CD4-positive, alpha-beta T cell (primary cell): ENCODE measurements at regions of chr14 and their contacts with region 1.

Region 1: GRCh38 chr14:62162998-62163589 is 400.9 kb downstream of the SNAPC1 start:
- DNase-seq: peak in 3 of 14 experiments; percentile 11 to 32 (median 26)
- ATAC-seq: no peak
- H3K4me3 ChIP-seq: no peak overlapping the region
- H3K4me3 Mint-ChIP-seq: no peak overlapping the region
- H3K27ac ChIP-seq: no peak overlapping the region
- H3K27ac Mint-ChIP-seq: no peak overlapping the region
- H3K4me1 ChIP-seq: no peaks in the 10 kb centered on the region
- H3K4me1 Mint-ChIP-seq: no peaks in the 10 kb centered on the region
- H3K27me3 ChIP-seq: peaks cover 6 to 14% of the 10 kb centered on the region in 2 experiments
- H3K27me3 Mint-ChIP-seq: peaks cover 61% of the 10 kb centered on the region
- CTCF ChIP-seq: peak; percentile 58

Region 2: GRCh38 chr14:61475316-61475715 is 687.8 kb before region 1 on chr14:
- CTCF ChIA-PET with region 1: no interaction called
- POLR2A ChIA-PET with region 1: no interaction called
- intact Hi-C with region 1: no loop called
- DNase-seq: peak in 3 of 14 experiments; percentile 71 to 80 (median 76)
- ATAC-seq: no peak
- H3K4me3 ChIP-seq: no peak overlapping the region
- H3K4me3 Mint-ChIP-seq: peak overlapping the region; percentile 5
- H3K27ac ChIP-seq: peak overlapping the region; percentile 95 to 97
- H3K27ac Mint-ChIP-seq: peak overlapping the region; percentile 84
- H3K4me1 ChIP-seq: peaks cover 86% of the 10 kb centered on the region
- H3K4me1 Mint-ChIP-seq: peaks cover 96% of the 10 kb centered on the region
- H3K27me3 ChIP-seq: no peaks in the 10 kb centered on the region
- H3K27me3 Mint-ChIP-seq: no peaks in the 10 kb centered on the region
- CTCF ChIP-seq: peak; percentile 71

Region 3: GRCh38 chr14:63276492-63277342 is 1113.6 kb after region 1 on chr14:
- CTCF ChIA-PET with region 1: no interaction called
- POLR2A ChIA-PET with region 1: no interaction called
- intact Hi-C with region 1: loop called (anchors 2 to 10 kb)
- DNase-seq: peak in 3 of 14 experiments; percentile 18 to 33 (median 23)
- ATAC-seq: no peak
- H3K4me3 ChIP-seq: no peak overlapping the region
- H3K4me3 Mint-ChIP-seq: no peak overlapping the region
- H3K27ac ChIP-seq: no peak overlapping the region
- H3K27ac Mint-ChIP-seq: no peak overlapping the region
- H3K4me1 ChIP-seq: no peaks in the 10 kb centered on the region
- H3K4me1 Mint-ChIP-seq: no peaks in the 10 kb centered on the region
- H3K27me3 ChIP-seq: peaks cover 0 to 6% of the 10 kb centered on the region in 2 experiments
- H3K27me3 Mint-ChIP-seq: peaks cover 10% of the 10 kb centered on the region
- CTCF ChIP-seq: peak; percentile 42